ENCODE measurements at regions of chr12 and their contacts with region 1.

Region 1: GRCh38 chr12:131345521-131346436 is 365.1 kb upstream of the SFSWAP start:
- DNase-seq: no peak
- H3K4me3 ChIP-seq: no peak overlapping the region
- H3K27ac ChIP-seq: no peak overlapping the region
- H3K4me1 ChIP-seq: peaks cover 0 to 4% (median 0%) of the 10 kb centered on the region in 3 donors
- H3K27me3 ChIP-seq: no peaks in the 10 kb centered on the region
- CTCF ChIP-seq: no peak

Region 2: GRCh38 chr12:131621701-131622421 is 276.1 kb after region 1 on chr12:
- intact Hi-C with region 1: loop called (anchors 2 kb)
- DNase-seq: peak in 3 of 5 donors; percentile 17 to 66 (median 57)
- H3K4me3 ChIP-seq: no peak overlapping the region
- H3K27ac ChIP-seq: no peak overlapping the region
- H3K4me1 ChIP-seq: no peaks in the 10 kb centered on the region
- H3K27me3 ChIP-seq: no peaks in the 10 kb centered on the region
- CTCF ChIP-seq: no peak

Region 3: DNA sequence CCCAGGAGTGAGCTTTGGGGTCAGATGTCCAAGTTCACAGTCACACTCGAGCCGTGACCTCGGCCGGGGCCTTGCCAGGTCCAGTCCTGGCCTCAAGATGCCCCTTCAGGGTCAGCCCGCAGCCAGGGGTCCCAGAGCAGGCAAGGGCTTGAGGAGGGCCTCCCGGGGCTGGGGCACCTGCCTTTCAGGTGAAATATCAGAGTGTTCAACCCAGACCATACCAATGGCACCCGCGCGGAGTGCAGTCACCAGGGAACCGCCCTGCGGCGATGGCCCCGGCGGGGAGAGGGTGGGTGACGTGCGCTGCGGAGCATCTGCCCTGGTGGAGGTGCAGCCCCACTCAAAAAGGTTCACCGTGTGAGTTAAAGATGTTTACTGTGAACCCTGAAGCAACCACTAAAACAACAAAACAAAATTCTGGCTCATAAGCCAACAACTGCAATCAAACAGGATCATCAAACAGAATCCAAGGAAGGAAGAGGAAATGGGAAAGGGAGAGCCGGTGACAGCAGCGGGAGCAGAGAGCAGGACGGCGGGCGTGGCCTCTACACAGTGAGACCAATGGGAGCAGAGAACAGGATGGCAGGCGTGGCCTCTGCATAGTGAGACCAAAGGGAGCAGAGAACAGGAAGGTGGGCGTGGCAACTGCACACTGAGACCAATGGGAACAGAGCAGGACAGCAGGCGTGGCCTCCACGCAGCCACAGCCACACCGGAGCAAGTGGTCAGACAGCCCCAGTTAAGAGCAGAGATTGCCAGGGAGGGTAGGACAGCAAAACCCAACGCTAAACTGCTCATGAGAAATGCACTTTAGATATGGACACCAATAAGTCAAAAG is 1248.0 kb after region 1 on chr12:
- intact Hi-C with region 1: no loop called
- DNase-seq: peak; percentile 95 to 99 (median 98)
- H3K4me3 ChIP-seq: peak overlapping the region in 2 of 3 donors; percentile 18 to 32
- H3K27ac ChIP-seq: no peak overlapping the region
- H3K4me1 ChIP-seq: peaks cover 0 to 12% (median 4%) of the 10 kb centered on the region in 3 donors
- H3K27me3 ChIP-seq: peaks cover 4% of the 10 kb centered on the region
- CTCF ChIP-seq: no peak